BJ (cell line): ENCODE measurements at regions of chr1 and their contacts with region 1.

Region 1: DNA sequence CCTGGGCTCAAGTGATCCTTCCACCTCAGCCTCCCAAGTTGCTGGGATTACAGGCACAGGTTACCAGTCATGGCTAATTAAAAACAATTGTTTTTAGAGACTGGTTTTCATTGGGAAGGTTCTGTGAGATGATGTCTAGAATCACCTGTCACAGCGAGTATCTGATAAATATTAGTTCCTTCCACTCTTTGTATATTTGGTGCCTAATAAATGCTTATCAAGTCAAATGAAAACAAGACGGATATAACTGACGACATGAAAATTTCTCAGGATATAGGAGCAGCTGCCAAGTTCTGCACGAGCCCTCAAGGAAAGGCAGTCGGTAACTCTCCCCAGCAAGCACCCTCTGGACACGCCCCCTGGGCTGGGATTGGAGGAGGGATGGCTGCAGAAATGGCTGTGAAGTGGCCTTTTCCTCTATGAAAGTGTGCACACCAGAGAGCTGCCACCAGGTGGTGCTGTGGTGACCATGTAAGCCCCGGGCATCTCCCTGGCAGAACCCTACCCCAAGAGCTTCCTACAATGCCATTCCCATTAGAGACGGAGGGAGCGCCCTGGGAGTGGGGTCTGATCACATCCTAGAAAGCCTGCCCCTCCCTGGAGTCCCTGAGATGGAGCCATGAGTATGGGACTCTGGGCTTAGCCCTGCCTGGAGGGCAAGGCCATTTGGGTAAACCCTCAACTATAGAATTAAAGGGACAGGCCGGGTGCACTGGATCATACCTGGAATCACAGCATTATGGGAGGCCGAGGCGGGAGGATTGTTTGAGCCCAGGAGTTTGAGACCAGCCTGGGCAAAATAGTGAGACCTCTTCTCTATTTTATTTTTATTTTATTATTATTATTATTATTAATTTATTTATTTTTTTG is 50.9 kb downstream of the HTR6 start:
- DNase-seq: peak; percentile 78
- H3K4me3 ChIP-seq: no peak overlapping the region
- H3K27me3 ChIP-seq: no peaks in the 10 kb centered on the region
- CTCF ChIP-seq: peak; percentile 92

Region 2: GRCh38 chr1:19676438-19676922 is 39.1 kb before region 1 on chr1:
- CTCF ChIA-PET with region 1: no interaction called
- POLR2A ChIA-PET with region 1: no interaction called
- DNase-seq: no peak
- H3K4me3 ChIP-seq: no peak overlapping the region
- H3K27me3 ChIP-seq: peaks cover 4% of the 10 kb centered on the region; the same call in 1 of the 2 replicates
- CTCF ChIP-seq: no peak

Region 3: GRCh38 chr1:19728413-19729145 is 13.0 kb after region 1 on chr1:
- CTCF ChIA-PET with region 1: interaction called, 19 read pairs
- POLR2A ChIA-PET with region 1: no interaction called
- DNase-seq: no peak
- H3K4me3 ChIP-seq: no peak overlapping the region
- H3K27me3 ChIP-seq: no peaks in the 10 kb centered on the region
- CTCF ChIP-seq: no peak

Region 4: GRCh38 chr1:19735440-19736127 is 20.0 kb after region 1 on chr1:
- CTCF ChIA-PET with region 1: interaction called, 10 read pairs
- POLR2A ChIA-PET with region 1: no interaction called
- DNase-seq: peak; percentile 96
- H3K4me3 ChIP-seq: no peak overlapping the region
- H3K27me3 ChIP-seq: no peaks in the 10 kb centered on the region
- CTCF ChIP-seq: no peak